AG04450 (cell line): ENCODE measurements at regions of chr7 and their contacts with region 1.

Region 1: DNA sequence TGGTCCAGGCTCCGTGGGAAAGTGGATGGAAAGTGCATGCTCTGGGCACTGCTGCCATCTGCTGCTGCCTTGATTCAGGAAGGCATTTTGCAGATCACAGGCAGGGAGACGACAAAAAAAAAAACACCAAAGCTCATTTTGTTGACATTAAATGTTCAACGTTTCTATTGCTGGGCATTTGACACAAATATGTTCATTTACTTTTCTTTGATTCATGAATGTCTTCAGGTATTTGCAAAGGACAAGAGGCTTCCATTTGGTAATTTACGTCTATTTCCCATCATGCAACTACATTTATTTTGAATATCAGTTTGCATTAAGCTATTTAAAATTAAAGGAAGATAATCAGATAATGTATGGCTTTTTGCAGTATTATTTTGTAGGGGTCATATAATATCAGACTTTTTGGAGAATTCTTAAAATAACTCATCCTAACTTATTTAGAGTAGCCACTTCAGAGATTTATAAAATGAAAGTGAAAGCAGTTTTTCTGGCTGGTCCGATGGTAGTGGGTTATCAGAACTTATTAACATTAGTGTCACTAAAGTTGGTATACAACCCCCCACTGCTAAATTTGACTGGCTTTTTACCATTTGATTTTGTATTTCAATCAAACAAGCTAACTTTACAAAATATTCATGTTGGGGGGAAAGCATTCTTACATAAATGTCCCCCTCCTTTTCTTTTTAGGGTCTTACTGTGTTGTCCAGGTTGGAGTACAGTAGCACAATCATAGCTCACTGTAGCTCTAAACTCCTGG is 65.3 kb downstream of the PDIA4 start:
- DNase-seq: peak; percentile 44
- H3K4me3 ChIP-seq: peak overlapping the region; percentile 63
- H3K27ac ChIP-seq: peak overlapping the region; percentile 47
- H3K27me3 ChIP-seq: no peaks in the 10 kb centered on the region
- CTCF ChIP-seq: peak; percentile 88

Region 2: DNA sequence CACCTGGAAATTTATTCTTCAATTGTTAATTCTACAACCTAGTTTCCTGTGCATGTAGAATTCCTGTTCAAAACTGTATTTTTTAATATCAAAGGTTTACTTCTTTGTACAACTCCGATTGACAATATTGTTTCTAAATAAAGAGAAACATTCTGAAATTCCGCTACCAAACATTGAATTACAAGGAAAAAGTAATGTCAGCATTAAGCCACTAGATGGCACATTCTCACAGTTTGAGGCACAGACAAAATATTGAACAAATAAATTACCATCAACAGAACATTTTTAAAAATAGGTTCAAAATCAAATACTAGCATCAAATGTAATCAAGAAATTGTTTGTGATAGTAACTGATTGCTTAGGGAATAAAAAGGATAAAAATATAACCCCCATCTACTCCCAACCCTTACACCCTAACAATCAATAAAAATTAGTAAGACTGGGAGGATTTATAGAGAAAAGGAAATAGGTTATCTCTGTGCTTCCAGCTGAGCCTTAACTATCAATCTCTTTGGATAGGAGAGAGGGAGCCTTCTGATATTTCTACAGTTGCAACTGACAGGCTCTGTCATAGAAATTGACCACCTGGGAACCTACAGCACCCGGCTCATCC is 459.0 kb before region 1 on chr7:
- CTCF ChIA-PET with region 1: interaction called, 51 read pairs
- POLR2A ChIA-PET with region 1: no interaction called
- DNase-seq: no peak
- H3K4me3 ChIP-seq: no peak overlapping the region
- H3K27ac ChIP-seq: no peak overlapping the region
- H3K27me3 ChIP-seq: no peaks in the 10 kb centered on the region
- CTCF ChIP-seq: peak; percentile 70

Region 3: GRCh38 chr7:148575640-148576411 is 387.2 kb before region 1 on chr7:
- CTCF ChIA-PET with region 1: interaction called, 112 read pairs
- POLR2A ChIA-PET with region 1: no interaction called
- DNase-seq: peak; percentile 21
- H3K4me3 ChIP-seq: no peak overlapping the region
- H3K27ac ChIP-seq: no peak overlapping the region
- H3K27me3 ChIP-seq: no peaks in the 10 kb centered on the region
- CTCF ChIP-seq: peak; percentile 91

Region 4: GRCh38 chr7:148773334-148773733 is 189.7 kb before region 1 on chr7:
- CTCF ChIA-PET with region 1: interaction called, 21 read pairs
- POLR2A ChIA-PET with region 1: no interaction called
- DNase-seq: no peak
- H3K4me3 ChIP-seq: no peak overlapping the region
- H3K27ac ChIP-seq: peak overlapping the region; percentile 33
- H3K27me3 ChIP-seq: no peaks in the 10 kb centered on the region
- CTCF ChIP-seq: no peak

Region 5: DNA sequence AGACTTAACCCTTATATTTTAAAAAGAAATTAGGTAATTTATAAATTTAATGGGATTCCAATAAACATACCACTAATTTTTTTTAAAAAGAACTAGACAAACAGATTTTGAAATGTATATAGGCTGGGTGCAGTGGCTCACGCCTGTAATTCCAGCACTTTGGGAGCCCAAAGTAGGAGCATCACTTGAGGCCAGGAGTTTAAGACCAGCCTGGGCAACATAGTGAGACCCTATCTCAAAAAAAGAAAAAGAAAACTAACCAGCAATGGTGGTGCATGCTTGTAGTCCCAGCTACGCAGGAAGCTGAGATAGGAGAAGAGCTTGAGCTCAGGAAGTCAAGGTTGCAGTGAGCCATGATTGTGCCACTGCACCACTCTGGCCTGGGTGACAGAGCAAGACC is 141.6 kb before region 1 on chr7:
- CTCF ChIA-PET with region 1: interaction called, 10 read pairs
- POLR2A ChIA-PET with region 1: no interaction called
- DNase-seq: no peak
- H3K4me3 ChIP-seq: no peak overlapping the region
- H3K27ac ChIP-seq: no peak overlapping the region
- H3K27me3 ChIP-seq: no peaks in the 10 kb centered on the region
- CTCF ChIP-seq: no peak

Region 6: DNA sequence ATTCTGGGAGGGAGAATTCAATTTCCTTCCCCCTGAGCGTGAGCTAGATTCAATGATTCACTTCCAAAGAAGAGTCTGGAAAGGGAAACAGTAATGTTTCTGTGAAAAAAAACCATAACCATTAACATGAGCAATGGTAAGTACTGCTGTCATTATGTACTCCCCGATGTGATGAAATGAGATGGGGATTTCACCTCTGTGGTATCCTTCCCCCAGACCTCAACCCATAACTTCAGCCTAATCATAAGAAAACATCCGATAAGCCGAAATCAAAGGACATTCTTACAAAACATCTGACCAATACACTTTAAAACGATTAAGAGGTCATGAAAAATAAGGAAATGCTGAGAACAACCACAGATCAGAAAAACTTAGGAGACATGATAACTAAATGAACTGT is 106.1 kb before region 1 on chr7:
- CTCF ChIA-PET with region 1: interaction called, 13 read pairs
- POLR2A ChIA-PET with region 1: interaction called, 3 read pairs
- DNase-seq: no peak
- H3K4me3 ChIP-seq: no peak overlapping the region
- H3K27ac ChIP-seq: no peak overlapping the region
- H3K27me3 ChIP-seq: no peaks in the 10 kb centered on the region
- CTCF ChIP-seq: no peak

Region 7: DNA sequence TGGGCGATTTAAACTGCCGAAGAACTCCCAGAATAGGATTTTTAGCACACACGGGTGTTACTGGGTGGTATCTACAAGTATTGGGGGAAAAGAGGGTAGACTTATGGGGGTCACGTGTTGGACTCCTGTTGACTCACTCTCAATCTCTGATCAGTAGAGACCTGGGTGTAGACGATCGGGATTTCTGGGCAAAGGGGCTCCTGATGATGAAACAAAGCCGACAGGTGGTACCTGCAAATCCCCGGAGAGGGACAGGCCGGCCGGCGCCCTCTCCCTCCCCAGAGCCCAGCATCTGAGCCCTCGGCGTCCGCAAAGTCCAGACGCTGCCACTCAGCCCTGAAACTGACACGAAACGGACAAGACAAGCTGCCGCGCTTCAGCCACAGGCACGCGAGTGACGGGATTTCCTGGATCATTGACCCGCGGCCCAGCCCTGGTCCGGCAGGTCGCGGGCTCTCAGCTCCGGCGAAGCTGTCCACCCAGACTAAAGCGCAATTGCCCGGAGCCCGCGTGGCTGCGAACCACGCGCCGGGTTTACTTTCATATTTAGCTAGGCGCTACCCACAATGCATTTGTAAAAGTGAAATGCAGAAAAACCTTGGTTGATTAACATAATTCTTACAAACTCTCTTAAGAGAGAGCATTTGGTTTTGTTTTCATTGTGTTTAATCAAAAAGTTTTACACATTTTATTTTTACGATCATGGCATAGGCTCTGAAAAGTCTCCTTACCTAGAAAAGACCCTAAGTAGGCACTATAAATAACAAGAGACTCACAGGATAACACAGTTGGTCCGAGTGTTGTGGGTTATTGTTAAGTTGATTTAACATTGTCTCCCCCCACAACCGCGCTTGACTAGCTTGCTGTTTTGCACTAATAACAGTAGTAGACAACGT is 22.1 kb before region 1 on chr7:
- CTCF ChIA-PET with region 1: interaction called, 43 read pairs
- POLR2A ChIA-PET with region 1: no interaction called
- DNase-seq: peak; percentile 77
- H3K4me3 ChIP-seq: peak overlapping the region; percentile 92
- H3K27ac ChIP-seq: peak overlapping the region; percentile 91
- H3K27me3 ChIP-seq: no peaks in the 10 kb centered on the region
- CTCF ChIP-seq: no peak